ENCODE measurements at regions of chr6 and their contacts with region 1.

Region 1: DNA sequence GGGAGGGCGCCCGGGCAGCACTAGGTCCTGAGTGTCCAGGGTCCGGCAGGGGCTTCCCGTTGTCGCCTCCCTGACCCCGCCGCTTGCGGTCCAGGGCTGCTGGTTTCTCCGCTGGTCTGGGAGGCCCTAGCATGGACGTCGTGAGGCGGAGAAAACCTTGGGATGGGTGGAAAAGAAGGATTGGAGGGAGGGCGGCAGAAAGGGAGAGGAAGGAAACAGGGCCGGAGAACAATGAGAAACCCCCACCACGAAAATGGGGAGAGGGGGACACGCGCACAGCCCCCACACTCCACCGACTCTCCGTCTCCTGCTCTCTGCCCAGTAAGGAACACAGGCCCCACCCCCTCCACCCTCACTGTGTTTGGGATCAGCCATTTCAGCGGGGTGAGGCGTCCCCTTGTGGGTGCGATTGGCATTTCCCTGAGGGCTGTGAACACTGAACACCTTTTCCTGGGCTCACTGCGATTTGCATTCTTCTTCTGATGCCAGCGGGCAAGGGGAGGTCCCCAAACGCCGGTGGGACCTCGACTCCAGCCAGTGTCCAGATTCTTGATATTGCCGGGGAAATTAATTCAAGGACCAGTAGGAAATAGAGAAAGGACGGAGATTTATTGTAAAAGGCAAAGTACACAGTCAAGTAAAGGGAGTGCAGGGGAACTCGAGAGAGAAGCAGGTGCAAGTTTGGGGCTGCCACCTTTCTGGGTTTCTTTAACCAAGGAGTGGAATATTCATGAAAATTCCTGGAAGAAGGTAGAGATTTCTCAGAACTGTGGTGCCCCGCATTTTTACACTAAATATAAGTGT is 3.3 kb upstream of the RAET1G start:
- DNase-seq: peak; percentile 56
- ATAC-seq: peak; percentile 91
- H3K4me3 ChIP-seq: peak overlapping the region; percentile 48 to 67
- H3K27ac ChIP-seq: peak overlapping the region; percentile 70
- H3K4me1 ChIP-seq: 0 out of 2 replicates have a peak, but pooled peaks cover 3% of the 10 kb centered on the region
- H3K27me3 ChIP-seq: peaks cover 6% of the 10 kb centered on the region; the same call in 1 of the 2 replicates
- CTCF ChIP-seq: peak; percentile 97

Region 2: DNA sequence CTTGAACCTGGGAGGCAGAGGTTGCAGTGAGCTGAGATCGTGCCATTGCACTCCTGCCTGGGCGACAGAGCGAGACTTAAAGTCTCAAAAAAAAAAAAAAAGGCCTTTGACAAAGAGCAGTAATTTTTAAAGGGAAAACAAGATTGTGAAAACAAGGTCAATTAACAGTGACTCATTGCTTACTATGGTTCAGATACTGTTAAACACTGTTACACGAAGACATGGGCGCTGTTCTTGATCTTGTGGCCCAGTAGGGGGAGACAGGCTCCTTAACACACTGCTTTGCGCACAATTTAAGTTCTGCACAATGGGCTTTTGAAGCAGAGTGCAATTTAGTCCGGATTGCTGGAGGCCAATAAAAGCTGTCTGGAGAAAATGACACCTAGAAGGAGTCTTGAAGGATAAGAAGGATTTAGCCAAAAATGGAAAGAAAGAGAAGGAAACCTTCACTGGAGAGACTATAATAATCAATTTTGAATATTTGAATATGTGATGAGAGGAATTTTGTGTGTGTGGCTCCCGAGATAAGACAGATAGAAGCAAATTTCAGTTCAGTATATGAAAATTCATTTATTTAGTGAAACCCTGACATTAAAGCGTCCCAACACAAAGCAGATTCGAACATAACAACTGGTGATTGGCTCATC is 202.3 kb before region 1 on chr6:
- CTCF ChIA-PET with region 1: no interaction called
- POLR2A ChIA-PET with region 1: no interaction called
- in situ Hi-C with region 1: no loop called
- intact Hi-C with region 1: loop called (anchors 2 kb)
- DNase-seq: no peak
- ATAC-seq: peak; percentile 93
- H3K4me3 ChIP-seq: no peak overlapping the region
- H3K27ac ChIP-seq: no peak overlapping the region
- H3K4me1 ChIP-seq: 0 out of 2 replicates have a peak, but pooled peaks cover 2% of the 10 kb centered on the region
- H3K27me3 ChIP-seq: no peaks in the 10 kb centered on the region
- CTCF ChIP-seq: peak; percentile 93

Region 3: GRCh38 chr6:149863697-149864577 is 62.2 kb before region 1 on chr6 and contains the start of gene LRP11:
- CTCF ChIA-PET with region 1: no interaction called
- POLR2A ChIA-PET with region 1: no interaction called
- in situ Hi-C with region 1: no loop called
- intact Hi-C with region 1: loop called (anchors 10 kb)
- DNase-seq: no peak
- ATAC-seq: peak; percentile 85
- H3K4me3 ChIP-seq: peak within 1 kb of the TSS; percentile 74 to 75
- H3K27ac ChIP-seq: peak within 1 kb of the TSS; percentile 93
- H3K4me1 ChIP-seq: peaks cover 20% of the 10 kb centered on the region
- H3K27me3 ChIP-seq: no peaks in the 10 kb centered on the region
- CTCF ChIP-seq: no peak
- total RNA-seq, gene LRP11: 151 TPM

Measured in Panc1 (cell line).